PC-9 (cell line): ENCODE measurements at regions of chr1 and their contacts with region 1.

Region 1: DNA sequence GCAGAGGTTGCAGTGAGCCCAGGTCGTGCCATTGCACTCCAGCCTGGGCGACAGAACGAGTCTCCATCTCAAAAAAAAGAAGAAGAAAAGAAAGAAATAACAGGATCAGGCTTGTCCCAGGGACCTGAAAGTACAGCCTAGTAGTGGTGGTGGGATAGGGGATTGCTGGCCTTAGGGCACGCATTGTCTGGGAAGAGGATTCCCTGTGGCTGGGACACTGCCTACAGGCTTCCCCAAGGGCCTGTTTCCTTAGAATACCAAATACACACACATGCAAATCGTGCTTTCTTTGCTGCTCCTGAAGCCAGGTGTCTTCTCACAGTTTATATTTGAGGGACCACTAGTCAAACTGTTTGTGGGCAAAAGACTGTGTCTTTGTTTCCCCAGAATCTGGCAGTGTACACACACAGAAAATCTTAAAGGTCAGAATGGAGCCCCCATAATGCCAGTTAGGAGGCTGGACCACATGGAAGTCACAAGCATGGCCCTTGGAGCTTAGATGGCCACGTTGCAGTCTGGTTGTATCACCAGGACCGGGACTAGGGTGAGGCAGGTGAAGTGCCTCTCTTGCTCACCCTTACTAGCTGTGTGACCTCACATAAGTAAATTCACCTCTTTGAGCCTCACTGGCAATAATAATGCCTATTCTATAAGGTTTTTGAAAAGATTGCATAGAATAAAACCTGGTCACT is 12.7 kb upstream of the ASAP3 start:
- DNase-seq: no peak
- H3K4me3 ChIP-seq: no peak overlapping the region
- H3K27ac ChIP-seq: no peak overlapping the region
- H3K4me1 ChIP-seq: no peaks in the 10 kb centered on the region; the same call in 1 of the 2 replicates
- H3K27me3 ChIP-seq: no peaks in the 10 kb centered on the region
- CTCF ChIP-seq: no peak

Region 2: GRCh38 chr1:23591460-23592208 is 95.0 kb after region 1 on chr1:
- CTCF ChIA-PET with region 1: interaction called, 10 read pairs
- POLR2A ChIA-PET with region 1: no interaction called
- intact Hi-C with region 1: no loop called
- DNase-seq: no peak
- H3K4me3 ChIP-seq: no peak overlapping the region
- H3K27ac ChIP-seq: peak overlapping the region; percentile 93; the same call in 1 of the 2 replicates
- H3K4me1 ChIP-seq: peaks cover 39% of the 10 kb centered on the region
- H3K27me3 ChIP-seq: no peaks in the 10 kb centered on the region
- CTCF ChIP-seq: no peak

Region 3: DNA sequence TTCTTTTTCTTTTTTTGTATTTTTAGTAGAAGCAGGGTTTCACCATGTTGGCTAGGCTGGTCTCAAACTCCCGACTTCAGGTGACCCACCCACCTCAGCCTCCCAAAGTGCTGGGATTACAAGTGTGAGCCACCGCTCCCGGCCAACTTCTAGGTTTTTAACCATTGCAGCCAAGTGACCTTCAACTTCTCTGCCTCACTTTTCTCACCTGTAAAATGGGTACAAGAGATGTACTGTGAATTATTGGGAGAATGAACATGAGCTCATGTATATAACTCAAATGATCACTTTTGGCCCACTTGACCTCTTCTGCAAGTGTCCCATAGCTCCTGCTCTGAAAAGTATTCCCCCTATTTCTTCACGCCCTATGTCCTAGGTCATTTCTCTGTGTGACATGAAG is 183.2 kb after region 1 on chr1:
- CTCF ChIA-PET with region 1: no interaction called
- POLR2A ChIA-PET with region 1: no interaction called
- intact Hi-C with region 1: no loop called
- DNase-seq: no peak
- H3K4me3 ChIP-seq: no peak overlapping the region
- H3K27ac ChIP-seq: no peak overlapping the region
- H3K4me1 ChIP-seq: no peaks in the 10 kb centered on the region
- H3K27me3 ChIP-seq: peaks cover 16% of the 10 kb centered on the region; the same call in 1 of the 2 replicates
- CTCF ChIP-seq: no peak

Region 4: GRCh38 chr1:23964790-23965740 is 468.4 kb after region 1 on chr1:
- CTCF ChIA-PET with region 1: interaction called, 10 read pairs
- POLR2A ChIA-PET with region 1: no interaction called
- intact Hi-C with region 1: no loop called
- DNase-seq: no peak
- H3K4me3 ChIP-seq: no peak overlapping the region
- H3K27ac ChIP-seq: peak overlapping the region; percentile 47
- H3K4me1 ChIP-seq: peaks cover 9% of the 10 kb centered on the region; the same call in 1 of the 2 replicates
- H3K27me3 ChIP-seq: no peaks in the 10 kb centered on the region
- CTCF ChIP-seq: no peak